ENCODE measurements at regions of chr9 and their contacts with region 1.

Region 1: DNA sequence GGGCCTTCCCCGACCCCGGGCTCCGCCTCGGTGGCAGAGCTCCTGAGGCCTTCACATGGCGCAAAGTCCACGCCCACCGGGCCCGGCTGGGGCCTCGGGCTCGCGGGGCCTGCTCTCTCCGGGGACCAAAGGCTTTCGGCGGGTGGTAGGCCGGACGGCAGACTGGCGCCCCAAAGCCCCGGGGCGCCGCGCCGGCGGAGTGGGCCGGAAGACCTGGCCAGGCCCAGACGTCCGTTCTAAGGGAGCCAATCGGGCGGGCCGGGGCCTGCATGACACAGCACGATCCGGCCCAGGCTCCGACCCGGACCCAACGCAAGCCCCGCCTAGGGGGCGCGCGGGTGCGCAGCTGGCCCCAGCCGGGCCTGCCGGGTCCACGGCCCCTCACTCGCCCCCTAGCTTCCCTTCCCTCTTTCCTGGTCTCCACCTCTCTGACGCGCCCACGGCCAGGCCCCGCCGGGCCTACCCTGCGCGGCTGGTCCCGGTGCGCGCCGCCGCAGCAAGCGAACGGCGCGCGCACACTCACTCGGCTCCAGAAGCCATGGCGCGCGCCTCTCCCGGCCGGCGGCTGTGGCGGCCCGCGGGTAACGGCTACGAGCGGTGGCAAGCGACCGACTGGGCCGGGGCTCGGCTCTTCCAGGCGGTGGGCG is 488 bp downstream of the VCP start:
- DNase-seq: peak; percentile 81
- H3K4me3 Mint-ChIP-seq: peak overlapping the region; percentile 92
- H3K27ac Mint-ChIP-seq: peak overlapping the region; percentile 99
- H3K4me1 Mint-ChIP-seq: peaks cover 54% of the 10 kb centered on the region
- H3K27me3 Mint-ChIP-seq: peaks cover 2% of the 10 kb centered on the region

Region 2: DNA sequence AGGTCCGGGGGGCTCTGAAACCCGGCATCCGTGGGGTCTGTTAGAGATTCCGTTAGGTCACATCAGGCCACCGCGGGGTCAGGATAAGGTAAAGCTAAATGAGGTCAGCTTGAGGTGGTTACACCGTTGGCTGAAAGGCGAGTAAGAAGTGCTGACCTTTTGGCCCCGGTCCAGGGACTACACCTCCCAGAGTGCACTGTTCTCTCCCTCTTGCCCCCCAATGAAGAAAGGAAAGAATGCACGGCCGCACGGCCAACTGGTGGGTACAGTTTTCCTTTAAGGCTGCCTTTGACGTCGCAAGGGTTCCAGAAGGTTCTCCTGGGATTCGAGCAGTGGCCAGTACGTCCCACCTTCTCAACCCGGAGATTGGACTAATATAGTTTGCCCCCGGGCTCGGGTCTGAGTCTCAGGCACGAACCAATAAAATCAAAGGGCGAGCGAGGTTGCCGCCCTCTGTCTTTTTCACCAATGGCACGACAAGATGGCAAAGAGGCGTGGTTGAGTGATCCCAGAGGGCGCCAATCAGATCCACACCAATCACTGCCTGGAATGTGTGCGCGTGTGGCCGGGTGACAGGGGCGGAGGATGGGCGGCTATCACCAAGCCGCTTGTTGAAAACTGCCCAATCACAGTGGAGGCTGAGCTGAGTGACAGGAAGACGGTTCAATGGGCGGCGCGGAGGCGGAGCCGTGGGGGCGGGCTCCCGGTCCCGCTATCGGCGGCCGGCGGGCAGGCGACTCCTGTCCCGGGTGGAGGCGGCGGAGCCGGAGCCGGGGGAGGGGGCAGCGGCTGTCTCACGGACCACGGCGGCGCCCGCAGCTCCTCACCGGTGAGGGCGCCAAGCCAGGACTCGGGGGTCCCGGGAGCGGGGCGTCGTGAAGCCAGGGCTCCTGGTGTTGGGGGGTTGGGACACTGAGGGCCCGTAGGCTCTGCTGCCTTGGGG is 82.7 kb before region 1 on chr9 and contains the start of gene DNAJB5:
- CTCF ChIA-PET with region 1: interaction called, 3 read pairs
- POLR2A ChIA-PET with region 1: interaction called, 8 read pairs
- intact Hi-C with region 1: loop called (anchors 1 kb)
- DNase-seq: peak; percentile 99
- H3K4me3 Mint-ChIP-seq: peak within 1 kb of the TSS; percentile 89
- H3K27ac Mint-ChIP-seq: peak within 1 kb of the TSS; percentile 89
- H3K4me1 Mint-ChIP-seq: peaks cover 81% of the 10 kb centered on the region
- H3K27me3 Mint-ChIP-seq: no peaks in the 10 kb centered on the region
- total RNA-seq, gene DNAJB5: 11.5 to 12.0 TPM

Region 3: GRCh38 chr9:35096035-35096849 is 24.3 kb after region 1 on chr9 and contains the start of gene PIGO:
- CTCF ChIA-PET with region 1: interaction called, 40 read pairs
- POLR2A ChIA-PET with region 1: interaction called, 23 read pairs
- intact Hi-C with region 1: loop called (anchors 1 kb)
- DNase-seq: peak; percentile 93
- H3K4me3 Mint-ChIP-seq: peak within 1 kb of the TSS; percentile 84
- H3K27ac Mint-ChIP-seq: peak within 1 kb of the TSS; percentile 93
- H3K4me1 Mint-ChIP-seq: peaks cover 27% of the 10 kb centered on the region
- H3K27me3 Mint-ChIP-seq: no peaks in the 10 kb centered on the region
- total RNA-seq, gene PIGO: 19.3 to 20.9 TPM

Region 4: DNA sequence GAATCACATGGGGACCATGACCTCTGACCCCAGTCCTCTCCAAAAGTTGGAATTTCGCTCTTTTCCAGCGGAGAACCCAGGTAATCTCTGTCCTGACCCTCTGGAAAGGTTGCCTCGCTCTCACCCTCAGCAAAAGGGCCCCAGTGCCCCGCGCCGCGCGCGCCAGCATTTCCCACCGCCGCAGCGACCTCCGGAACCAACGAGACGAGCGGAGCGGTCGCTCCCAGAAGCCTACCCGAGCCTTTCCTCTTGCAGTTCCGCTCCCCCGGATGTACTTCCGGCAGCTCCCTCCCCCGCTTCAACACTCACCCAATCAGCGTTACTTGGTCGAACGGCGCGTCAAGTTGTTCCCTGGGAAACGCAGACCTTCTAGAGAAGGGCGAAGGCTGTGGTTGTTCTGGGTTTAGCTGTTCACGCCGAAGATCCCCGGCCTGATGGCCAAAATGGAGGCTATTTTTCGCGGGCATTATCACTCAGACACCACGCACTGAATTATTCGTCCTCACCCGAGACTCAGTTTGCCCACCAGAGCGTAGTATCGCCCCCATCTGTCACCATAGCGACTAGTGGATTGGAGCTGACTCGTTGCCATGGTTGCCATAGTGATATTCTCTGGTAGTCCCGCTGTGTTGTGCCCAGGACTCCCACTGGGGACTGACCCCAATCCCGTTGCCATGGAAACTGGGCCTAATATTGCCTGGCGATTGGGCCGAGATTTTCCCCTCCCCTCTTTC is 31.2 kb after region 1 on chr9 and contains the start of gene STOML2:
- CTCF ChIA-PET with region 1: interaction called, 40 read pairs
- POLR2A ChIA-PET with region 1: interaction called, 36 read pairs
- intact Hi-C with region 1: no loop called
- DNase-seq: peak; percentile 97
- H3K4me3 Mint-ChIP-seq: peak within 1 kb of the TSS; percentile 99
- H3K27ac Mint-ChIP-seq: peak within 1 kb of the TSS; percentile 93
- H3K4me1 Mint-ChIP-seq: peaks cover 30% of the 10 kb centered on the region
- H3K27me3 Mint-ChIP-seq: no peaks in the 10 kb centered on the region
- total RNA-seq, gene STOML2: 162 TPM

Region 5: GRCh38 chr9:35111001-35111933 is 39.3 kb after region 1 on chr9:
- CTCF ChIA-PET with region 1: interaction called, 3 read pairs
- POLR2A ChIA-PET with region 1: interaction called, 37 read pairs
- intact Hi-C with region 1: loop called (anchors 1 kb)
- DNase-seq: peak; percentile 98
- H3K4me3 Mint-ChIP-seq: peak overlapping the region; percentile 75
- H3K27ac Mint-ChIP-seq: peak overlapping the region; percentile 81
- H3K4me1 Mint-ChIP-seq: peaks cover 42% of the 10 kb centered on the region
- H3K27me3 Mint-ChIP-seq: no peaks in the 10 kb centered on the region

Region 6: GRCh38 chr9:35258676-35259474 is 186.9 kb after region 1 on chr9:
- CTCF ChIA-PET with region 1: interaction called, 3 read pairs
- POLR2A ChIA-PET with region 1: no interaction called
- intact Hi-C with region 1: loop called (anchors 2 kb)
- DNase-seq: peak; percentile 56
- H3K4me3 Mint-ChIP-seq: no peak overlapping the region
- H3K27ac Mint-ChIP-seq: no peak overlapping the region
- H3K4me1 Mint-ChIP-seq: no peaks in the 10 kb centered on the region
- H3K27me3 Mint-ChIP-seq: no peaks in the 10 kb centered on the region

Region 7: DNA sequence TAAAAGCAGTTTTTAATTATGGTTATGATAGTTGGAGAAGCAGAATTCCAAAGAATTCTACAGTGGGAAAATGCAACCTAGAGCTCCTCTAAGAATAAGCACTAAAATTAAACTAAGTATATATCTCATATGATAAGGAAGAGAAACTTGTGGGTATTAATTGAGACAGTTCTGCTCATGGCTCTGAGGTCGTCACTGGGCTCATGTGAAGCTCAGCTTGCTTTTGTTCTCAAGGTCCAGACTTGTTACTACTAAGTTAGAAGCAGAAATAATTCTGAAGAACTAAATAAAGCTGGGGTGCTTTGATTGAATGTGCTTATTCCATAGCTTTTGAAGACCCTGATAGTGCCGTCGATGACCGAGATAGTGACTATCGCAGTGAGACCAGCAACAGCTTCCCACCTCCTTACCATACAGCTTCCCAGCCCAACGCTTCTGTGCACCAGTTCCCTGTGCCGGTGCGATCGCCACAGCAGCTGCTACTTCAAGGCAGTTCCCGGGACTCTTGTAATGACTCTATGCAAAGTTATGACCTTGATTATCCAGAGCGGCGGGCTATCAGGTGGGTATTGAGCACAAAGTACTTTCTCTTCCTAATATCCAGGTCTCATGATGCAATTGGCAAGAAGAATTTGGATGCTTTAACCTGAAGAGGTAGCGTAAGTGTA is 223.6 kb after region 1 on chr9:
- CTCF ChIA-PET with region 1: no interaction called
- POLR2A ChIA-PET with region 1: no interaction called
- intact Hi-C with region 1: no loop called
- DNase-seq: no peak
- H3K4me3 Mint-ChIP-seq: no peak overlapping the region
- H3K27ac Mint-ChIP-seq: no peak overlapping the region
- H3K4me1 Mint-ChIP-seq: no peaks in the 10 kb centered on the region
- H3K27me3 Mint-ChIP-seq: peaks cover 10% of the 10 kb centered on the region

Region 8: DNA sequence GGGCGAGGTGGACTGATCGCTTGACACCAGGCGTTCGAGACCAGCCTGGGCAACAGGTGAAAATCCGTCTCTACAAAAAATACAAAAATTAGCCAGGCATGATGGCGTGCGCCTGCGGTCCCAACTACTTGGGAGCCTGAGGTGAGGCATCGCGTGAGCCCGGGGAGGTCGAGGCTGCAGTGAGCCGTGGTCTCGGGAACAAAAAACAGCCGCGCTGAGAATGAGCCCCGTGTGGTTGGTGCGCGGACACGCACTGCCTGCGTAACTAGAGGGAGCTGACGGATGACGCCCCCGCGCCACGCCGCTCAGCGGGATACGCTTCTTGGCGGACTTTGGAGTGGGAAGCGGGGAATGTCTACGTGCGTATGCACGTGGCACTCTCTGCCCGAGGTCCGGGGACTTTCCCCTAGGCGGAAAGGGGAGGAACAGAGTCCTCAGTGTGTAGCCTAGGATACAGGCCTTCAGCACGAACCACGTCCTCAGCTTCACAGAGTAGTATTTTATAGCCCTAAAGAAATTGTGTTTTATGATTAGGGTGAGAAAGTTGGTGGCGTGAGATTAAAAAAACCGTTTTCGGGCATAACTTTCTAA is 585.7 kb after region 1 on chr9 and contains the start of gene RMRP:
- CTCF ChIA-PET with region 1: no interaction called
- POLR2A ChIA-PET with region 1: interaction called, 3 read pairs
- intact Hi-C with region 1: loop called (anchors 5 kb)
- DNase-seq: peak; percentile 96
- H3K4me3 Mint-ChIP-seq: peak within 1 kb of the TSS; percentile 86
- H3K27ac Mint-ChIP-seq: peak within 1 kb of the TSS; percentile 96
- H3K4me1 Mint-ChIP-seq: peaks cover 64% of the 10 kb centered on the region
- H3K27me3 Mint-ChIP-seq: peaks cover 2% of the 10 kb centered on the region
- total RNA-seq, gene RMRP: 10,694 to 13,592 TPM

Measured in activated CD4-positive, alpha-beta memory T cell treated with anti-CD3 and anti-CD28 coated beads for 36 hours (primary cell).